Heart right ventricle (tissue), 16 donors: ENCODE measurements at regions of chr9 and their contacts with region 1.

Region 1: DNA sequence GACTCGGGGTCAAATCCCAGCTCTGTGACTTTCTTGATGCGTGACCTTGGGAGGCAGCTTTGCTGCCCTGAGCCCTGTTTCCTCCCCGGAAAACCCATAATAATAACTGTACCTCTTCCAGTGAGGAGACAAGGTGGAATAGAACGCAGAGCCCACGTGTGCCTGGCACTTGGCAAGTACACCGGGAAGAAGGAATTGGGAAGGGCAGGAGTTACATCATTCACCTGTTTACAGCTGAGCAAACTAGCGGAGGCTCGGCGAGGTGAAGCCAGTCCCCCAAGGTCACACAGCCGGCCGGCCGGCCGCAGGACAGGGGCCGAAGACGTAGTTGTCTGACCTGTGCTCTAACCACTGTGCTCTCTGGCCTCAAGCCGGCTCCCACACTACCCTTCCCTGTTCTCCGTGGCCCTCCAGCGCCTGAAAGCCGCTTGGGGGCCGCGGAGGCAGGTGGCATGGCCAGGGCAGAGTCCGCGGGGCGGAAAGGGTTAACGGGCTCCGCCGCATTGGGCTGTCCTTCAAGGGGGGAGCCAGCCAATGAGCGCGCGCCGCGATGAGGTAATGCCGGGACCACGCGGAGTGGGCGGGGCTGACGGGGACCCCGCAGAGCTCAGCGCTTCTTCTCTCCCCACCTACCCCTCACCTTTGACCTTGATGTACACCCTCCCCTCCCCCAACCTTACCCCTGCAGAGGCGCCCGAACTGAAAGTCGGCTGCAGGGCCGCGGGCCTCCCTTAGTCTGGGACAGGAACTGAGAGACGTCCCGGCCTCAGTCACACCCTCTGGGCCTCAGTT is 125.2 kb downstream of the C9orf50 start:
- DNase-seq: peak; percentile 96 to 97
- ATAC-seq: peak; percentile 82 to 93 (median 90)
- H3K4me3 ChIP-seq: peak overlapping the region; percentile 35 to 66 (median 54)
- H3K27ac ChIP-seq: peak overlapping the region; percentile 92 to 100 (median 98)
- H3K4me1 ChIP-seq: peaks cover 19 to 91% (median 67%) of the 10 kb centered on the region in 9 donors
- H3K27me3 ChIP-seq: no peaks in the 10 kb centered on the region
- CTCF ChIP-seq: no peak

Region 2: DNA sequence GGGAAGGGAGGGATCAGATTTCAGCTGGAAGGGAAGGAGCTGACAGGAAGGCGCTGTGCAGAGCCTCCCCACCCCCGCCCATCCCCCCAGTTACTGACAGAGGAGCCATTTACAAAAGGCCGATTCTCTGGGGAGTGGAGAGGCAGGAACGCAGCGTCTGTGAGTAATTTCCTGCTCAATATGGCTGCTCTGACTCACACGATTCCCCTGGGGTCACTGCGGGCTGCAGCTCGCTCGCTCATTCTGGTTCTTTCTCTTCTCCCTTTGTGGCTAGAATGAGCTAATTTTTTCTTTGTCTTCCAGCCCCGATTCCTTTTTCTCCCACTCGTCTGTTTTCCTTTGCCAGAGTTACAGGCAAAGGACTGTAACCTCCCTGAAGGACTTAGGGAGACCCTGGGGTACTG is 355.7 kb before region 1 on chr9:
- intact Hi-C with region 1: loop called in 7 of 10 experiments (anchors 1 to 10 kb)
- DNase-seq: peak; percentile 89 to 99
- ATAC-seq: peak; percentile 69 to 84 (median 77)
- H3K4me3 ChIP-seq: peak overlapping the region; percentile 37 to 62 (median 54)
- H3K27ac ChIP-seq: peak overlapping the region; percentile 100
- H3K4me1 ChIP-seq: peaks cover 49 to 79% (median 71%) of the 10 kb centered on the region in 9 donors
- H3K27me3 ChIP-seq: no peaks in the 10 kb centered on the region
- CTCF ChIP-seq: no peak

Region 3: GRCh38 chr9:129258124-129258822 is 237.5 kb before region 1 on chr9:
- intact Hi-C with region 1: loop called in 1 of 10 experiments (anchors 10 kb)
- DNase-seq: peak; percentile 91 to 94
- ATAC-seq: peak; percentile 70 to 85 (median 80)
- H3K4me3 ChIP-seq: peak overlapping the region in 8 of 10 donors; percentile 5 to 46 (median 34)
- H3K27ac ChIP-seq: peak overlapping the region in 6 of 10 donors; percentile 9 to 59 (median 51)
- H3K4me1 ChIP-seq: peaks cover 5 to 53% (median 36%) of the 10 kb centered on the region in 9 donors
- H3K27me3 ChIP-seq: peaks cover 0 to 19% (median 0%) of the 10 kb centered on the region in 7 donors
- CTCF ChIP-seq: no peak

Region 4: DNA sequence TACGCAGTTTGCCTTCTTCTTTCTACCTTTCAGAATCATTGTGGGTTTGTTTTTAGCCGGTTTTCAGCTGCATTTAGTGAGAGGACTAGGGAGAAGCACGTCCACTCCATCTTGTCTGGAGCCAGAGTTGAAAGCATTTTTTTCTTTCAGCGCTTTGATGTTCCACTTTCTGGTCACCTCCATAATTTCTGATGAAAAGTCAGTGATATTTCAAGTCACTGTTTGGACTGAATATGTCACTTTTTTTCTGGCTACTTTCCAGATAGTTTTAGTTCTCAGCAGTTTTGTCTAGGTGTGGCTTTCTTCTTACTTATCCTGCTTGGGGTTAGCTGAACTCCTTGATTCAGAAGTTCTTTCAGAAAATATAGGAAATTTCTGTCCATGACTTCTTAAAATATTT is 193.8 kb before region 1 on chr9:
- intact Hi-C with region 1: no loop called
- DNase-seq: no peak
- ATAC-seq: no peak
- H3K4me3 ChIP-seq: no peak overlapping the region
- H3K27ac ChIP-seq: no peak overlapping the region
- H3K4me1 ChIP-seq: no peaks in the 10 kb centered on the region
- H3K27me3 ChIP-seq: no peaks in the 10 kb centered on the region
- CTCF ChIP-seq: no peak

Region 5: GRCh38 chr9:129333953-129334724 is 161.6 kb before region 1 on chr9:
- intact Hi-C with region 1: loop called in 2 of 10 experiments (anchors 5 kb)
- DNase-seq: peak; percentile 88 to 89
- ATAC-seq: peak; percentile 87 to 95 (median 91)
- H3K4me3 ChIP-seq: peak overlapping the region in 8 of 10 donors; percentile 2 to 39 (median 29)
- H3K27ac ChIP-seq: peak overlapping the region; percentile 69 to 96 (median 88)
- H3K4me1 ChIP-seq: peaks cover 19 to 60% (median 53%) of the 10 kb centered on the region in 9 donors
- H3K27me3 ChIP-seq: no peaks in the 10 kb centered on the region
- CTCF ChIP-seq: peak in 4 of 9 donors; percentile 7 to 22 (median 11)

Region 6: GRCh38 chr9:129413537-129414376 is 82.0 kb before region 1 on chr9:
- intact Hi-C with region 1: loop called in 2 of 10 experiments (anchors 1 to 2 kb)
- DNase-seq: peak; percentile 99 to 100
- ATAC-seq: peak; percentile 85 to 92 (median 88)
- H3K4me3 ChIP-seq: peak overlapping the region; percentile 47 to 74 (median 61)
- H3K27ac ChIP-seq: peak overlapping the region; percentile 97 to 100 (median 100)
- H3K4me1 ChIP-seq: peaks cover 18 to 53% (median 31%) of the 10 kb centered on the region in 9 donors
- H3K27me3 ChIP-seq: no peaks in the 10 kb centered on the region
- CTCF ChIP-seq: no peak

Region 7: DNA sequence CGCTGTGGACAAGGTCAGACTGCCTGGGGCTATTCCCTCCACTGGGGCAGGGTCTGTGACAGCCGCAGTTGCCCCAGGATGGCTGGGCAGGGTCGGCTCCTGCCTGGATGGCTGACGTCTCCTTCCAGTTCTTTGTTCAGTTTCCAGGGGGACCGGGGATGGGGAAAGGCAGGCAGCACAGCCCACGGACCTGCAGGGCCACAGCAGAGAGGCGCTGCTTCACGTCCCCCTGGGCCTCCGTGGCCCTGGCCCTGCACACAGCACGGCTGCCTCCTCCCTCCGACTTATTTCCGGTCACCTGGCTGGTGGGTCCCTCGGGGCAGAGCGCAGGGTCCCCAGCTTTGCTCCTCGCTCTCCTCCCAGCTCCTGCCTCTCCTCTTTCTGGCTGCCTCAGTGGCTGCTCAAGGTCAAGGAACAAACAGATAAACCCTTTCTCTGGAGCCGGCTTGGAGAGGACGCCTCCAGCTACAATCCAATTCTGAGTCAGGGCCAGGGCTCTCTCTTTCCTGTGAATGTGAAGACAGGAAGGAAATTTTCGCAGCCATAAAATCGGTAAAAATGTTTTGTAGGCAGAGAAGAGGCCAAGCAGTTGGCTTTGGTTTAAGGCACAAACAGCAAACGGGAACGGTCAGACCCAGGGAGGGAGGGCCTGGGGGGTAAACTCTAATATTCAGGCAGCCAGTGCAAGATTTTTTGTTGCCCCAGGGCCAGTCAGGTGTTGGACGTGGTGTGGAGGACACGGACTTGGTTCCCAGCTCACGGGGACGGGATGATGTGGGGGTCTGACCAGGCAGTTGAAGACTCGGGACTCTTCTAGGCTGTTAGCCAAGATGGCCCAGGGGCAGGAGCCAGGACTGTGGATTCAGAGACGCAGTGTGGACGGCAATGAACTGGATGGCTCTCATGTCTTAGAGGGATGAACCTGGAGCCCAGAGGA is 44.4 kb before region 1 on chr9:
- intact Hi-C with region 1: no loop called
- DNase-seq: peak; percentile 49 to 52
- ATAC-seq: peak; percentile 41 to 80 (median 54)
- H3K4me3 ChIP-seq: peak overlapping the region in 2 of 10 donors; percentile 23
- H3K27ac ChIP-seq: peak overlapping the region; percentile 34 to 87 (median 74)
- H3K4me1 ChIP-seq: peaks cover 6 to 22% (median 14%) of the 10 kb centered on the region in 9 donors
- H3K27me3 ChIP-seq: no peaks in the 10 kb centered on the region
- CTCF ChIP-seq: no peak

Region 8: GRCh38 chr9:129550199-129550839 is 54.6 kb after region 1 on chr9:
- intact Hi-C with region 1: loop called in 5 of 10 experiments (anchors 5 to 10 kb)
- DNase-seq: peak; percentile 76 to 89
- ATAC-seq: peak; percentile 80 to 93 (median 88)
- H3K4me3 ChIP-seq: peak overlapping the region; percentile 19 to 65 (median 54)
- H3K27ac ChIP-seq: peak overlapping the region; percentile 64 to 91 (median 82)
- H3K4me1 ChIP-seq: peaks cover 16 to 32% (median 27%) of the 10 kb centered on the region in 9 donors
- H3K27me3 ChIP-seq: peaks cover 0 to 22% (median 0%) of the 10 kb centered on the region in 7 donors
- CTCF ChIP-seq: peak in 1 of 9 donors; percentile 7

Region 9: DNA sequence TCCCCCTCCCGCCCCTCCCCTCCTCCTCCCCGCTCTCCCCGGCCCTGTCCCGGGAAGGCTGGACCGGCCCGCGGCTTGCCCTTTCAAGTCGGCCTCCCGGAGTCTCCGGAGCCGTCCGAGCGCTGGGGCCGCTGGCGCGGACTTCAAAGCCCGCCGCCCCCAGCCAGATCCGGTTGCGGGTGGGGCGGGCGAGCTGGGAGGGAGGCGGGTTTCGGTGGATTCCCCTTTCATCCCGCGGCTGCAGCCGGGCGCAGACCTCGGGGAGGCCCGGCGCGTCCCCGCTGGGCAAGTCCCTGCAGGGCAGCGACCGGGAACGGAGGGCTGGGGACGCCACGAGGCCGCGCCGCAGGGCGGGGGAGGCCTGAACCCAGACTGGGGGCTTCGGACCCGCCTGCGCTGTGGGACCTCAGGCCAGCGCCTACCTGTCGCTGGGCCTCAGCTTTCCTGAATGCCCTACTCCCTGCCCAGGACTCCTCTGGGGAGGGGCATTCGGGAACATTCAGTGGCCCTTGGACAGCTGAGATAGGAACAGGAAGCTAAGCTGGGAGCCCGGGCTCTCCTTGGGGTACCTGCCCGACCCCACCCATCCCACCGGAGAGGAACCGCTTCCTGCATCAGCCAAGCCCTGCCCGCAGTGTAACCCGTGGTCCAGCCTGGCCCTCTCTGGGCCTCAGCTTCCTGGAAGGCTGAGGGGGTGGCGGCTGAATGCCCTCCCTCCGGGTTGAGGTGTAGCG is 101.8 kb after region 1 on chr9:
- intact Hi-C with region 1: loop called in 3 of 10 experiments (anchors 10 kb)
- DNase-seq: peak; percentile 62 to 75
- ATAC-seq: peak; percentile 60 to 79 (median 73)
- H3K4me3 ChIP-seq: peak overlapping the region; percentile 15 to 59 (median 52)
- H3K27ac ChIP-seq: peak overlapping the region; percentile 41 to 92 (median 84)
- H3K4me1 ChIP-seq: peaks cover 10 to 40% (median 20%) of the 10 kb centered on the region in 9 donors
- H3K27me3 ChIP-seq: peaks cover 0 to 24% (median 9%) of the 10 kb centered on the region in 7 donors
- CTCF ChIP-seq: no peak